ENCODE measurements at regions of chr14 and their contacts with region 1.

Region 1: GRCh38 chr14:72420725-72421474 is 473.0 kb downstream of the DPF3 start:
- DNase-seq: peak; percentile 85
- H3K4me3 ChIP-seq: no peak overlapping the region
- H3K27ac ChIP-seq: no peak overlapping the region
- H3K4me1 ChIP-seq: no peaks in the 10 kb centered on the region
- H3K27me3 ChIP-seq: no peaks in the 10 kb centered on the region
- CTCF ChIP-seq: peak; percentile 98

Region 2: DNA sequence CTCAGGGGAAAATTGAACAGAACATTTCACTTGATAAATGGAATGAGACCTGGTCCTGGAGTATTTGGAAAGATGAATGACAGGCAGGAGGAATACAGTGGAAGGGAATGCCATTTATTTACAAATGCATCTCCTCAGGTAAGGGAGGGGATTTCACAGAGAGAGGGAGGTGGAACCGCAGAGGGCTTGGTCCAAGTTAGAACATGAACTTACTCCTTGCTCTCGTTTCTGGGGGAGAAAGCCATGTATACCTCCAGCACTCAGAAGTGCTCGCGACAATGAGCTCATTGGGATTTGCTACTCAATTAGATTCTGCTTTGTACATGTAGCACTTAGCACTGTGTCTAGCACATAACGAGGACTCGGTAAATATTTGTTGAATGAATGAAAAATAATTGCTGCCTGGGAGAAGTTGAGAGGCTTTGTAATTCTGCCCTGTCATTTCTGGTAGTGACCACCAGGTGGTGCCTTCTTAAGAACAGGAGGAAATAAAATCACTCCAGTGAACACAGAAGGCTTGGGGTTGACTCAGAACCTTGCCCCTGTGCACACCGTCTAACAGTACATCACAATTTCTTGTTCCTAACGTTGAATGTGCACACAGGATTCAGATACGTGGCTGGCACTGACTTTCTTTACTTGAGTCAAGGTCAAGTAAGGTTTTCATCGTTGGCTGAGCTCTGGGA is 397.0 kb before region 1 on chr14:
- CTCF ChIA-PET with region 1: no interaction called
- POLR2A ChIA-PET with region 1: no interaction called
- intact Hi-C with region 1: loop called (anchors 5 kb)
- DNase-seq: peak; percentile 64
- H3K4me3 ChIP-seq: no peak overlapping the region
- H3K27ac ChIP-seq: no peak overlapping the region
- H3K4me1 ChIP-seq: no peaks in the 10 kb centered on the region
- H3K27me3 ChIP-seq: no peaks in the 10 kb centered on the region
- CTCF ChIP-seq: peak; percentile 77

Region 3: DNA sequence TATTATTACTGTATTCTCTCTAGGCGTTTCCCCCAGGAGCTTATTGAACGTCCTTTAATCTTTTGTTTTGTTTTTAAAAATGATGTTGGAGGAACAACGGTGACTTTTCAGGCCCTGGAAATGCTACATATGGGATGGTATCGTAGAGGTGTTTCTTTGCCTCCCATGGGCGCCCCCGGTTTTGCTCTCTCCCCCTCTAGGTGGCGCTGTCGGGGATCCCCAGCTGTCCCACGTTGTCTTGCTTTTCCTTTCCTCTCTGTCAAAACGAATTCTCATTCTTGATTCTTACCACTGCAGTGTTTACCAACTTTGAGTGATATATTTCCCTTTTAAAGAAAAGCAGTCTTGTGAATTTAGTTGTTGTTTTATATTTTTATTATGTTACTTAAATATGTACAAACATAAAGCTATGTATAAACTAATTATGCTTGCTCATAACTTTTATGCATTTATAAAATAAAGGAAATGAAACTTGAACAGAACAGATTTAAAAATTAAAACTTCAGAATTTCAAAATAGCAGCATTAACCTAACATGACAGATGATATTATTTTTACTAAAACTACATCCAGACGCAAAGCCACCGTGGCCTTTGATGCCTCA is 316.8 kb before region 1 on chr14:
- CTCF ChIA-PET with region 1: no interaction called
- POLR2A ChIA-PET with region 1: no interaction called
- intact Hi-C with region 1: loop called (anchors 5 kb)
- DNase-seq: peak; percentile 52
- H3K4me3 ChIP-seq: no peak overlapping the region
- H3K27ac ChIP-seq: no peak overlapping the region
- H3K4me1 ChIP-seq: no peaks in the 10 kb centered on the region
- H3K27me3 ChIP-seq: peaks cover 18% of the 10 kb centered on the region
- CTCF ChIP-seq: peak; percentile 95

Measured in A673 (cell line).